HepG2 (cell line): ENCODE measurements at regions of chr16 and their contacts with region 1.

Region 1: DNA sequence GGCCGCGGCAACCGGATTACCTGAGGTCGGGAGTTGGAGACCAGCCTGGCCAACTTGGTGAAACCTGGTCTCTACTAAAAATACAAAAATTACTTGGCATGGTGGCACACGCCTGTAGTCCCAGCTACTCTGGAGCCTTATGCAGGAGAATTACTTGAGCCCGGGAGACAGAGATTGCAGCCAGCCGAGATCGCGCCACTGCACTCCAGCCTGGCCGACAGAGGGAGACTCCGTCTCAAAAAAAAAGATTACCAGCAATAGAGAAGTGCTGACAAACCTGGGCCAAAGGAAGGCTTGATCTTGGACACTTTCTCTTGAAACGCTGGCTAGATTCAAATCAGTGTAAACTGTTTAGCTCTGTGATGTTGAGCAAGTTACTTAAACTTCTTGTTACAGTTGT is 4.3 kb downstream of the MT1H start:
- DNase-seq: peak; percentile 47
- ATAC-seq: peak; percentile 75
- H3K4me3 ChIP-seq: no peak overlapping the region
- H3K27ac ChIP-seq: no peak overlapping the region
- H3K4me1 ChIP-seq: 0 out of 2 replicates have a peak, but pooled peaks cover 3% of the 10 kb centered on the region
- H3K27me3 ChIP-seq: peaks cover 6 to 49% of the 10 kb centered on the region in 2 experiments
- CTCF ChIP-seq: peak; percentile 83
- EP300 ChIP-seq: no peak
- POLR2A ChIP-seq: no peak
- RAD21 ChIP-seq: peak; percentile 79

Region 2: DNA sequence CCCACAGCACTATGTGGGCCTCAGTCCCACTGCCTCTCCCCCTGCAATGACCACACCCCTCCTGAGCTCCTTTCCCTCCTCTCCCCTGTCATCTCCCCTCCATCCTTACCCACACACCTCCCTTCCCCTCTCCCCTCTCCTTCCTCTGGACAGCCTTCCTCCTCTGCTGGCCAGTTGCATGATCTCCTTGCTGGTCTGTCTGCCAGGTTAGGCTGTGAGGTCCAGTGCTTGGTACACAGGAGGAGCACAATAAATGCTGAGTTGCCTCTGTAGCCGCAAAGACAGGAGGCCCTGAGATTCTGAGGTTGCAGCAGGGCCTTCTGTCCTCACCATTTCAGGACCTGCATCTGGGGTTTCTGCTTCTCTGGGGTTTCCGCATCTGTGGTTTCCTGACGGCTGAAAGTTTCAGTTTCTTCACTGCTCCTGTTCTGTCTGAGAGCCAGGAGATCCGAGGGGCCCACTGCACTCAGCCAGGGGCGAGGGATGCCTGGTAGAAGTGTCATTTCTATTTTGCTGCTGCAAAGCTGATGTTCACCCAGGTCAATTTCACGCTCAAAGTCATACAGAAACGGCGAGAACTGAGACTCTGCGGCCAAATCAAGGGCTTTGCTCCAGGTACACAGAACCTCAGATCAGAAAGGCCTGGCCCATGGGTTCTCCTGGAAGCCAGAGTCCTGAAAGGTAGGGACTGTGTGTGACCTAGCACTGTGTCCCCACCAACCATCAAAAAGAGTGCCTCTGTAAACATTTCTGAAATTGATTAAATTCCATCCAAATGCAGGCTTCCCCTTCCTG is 186.5 kb after region 1 on chr16:
- CTCF ChIA-PET with region 1: no interaction called
- POLR2A ChIA-PET with region 1: no interaction called
- in situ Hi-C with region 1: no loop called
- intact Hi-C with region 1: loop called (anchors 5 kb)
- DNase-seq: peak; percentile 67
- ATAC-seq: peak; percentile 71
- H3K4me3 ChIP-seq: peak overlapping the region; percentile 33 to 62 (median 44)
- H3K27ac ChIP-seq: peak overlapping the region; percentile 34
- H3K4me1 ChIP-seq: peaks cover 87% of the 10 kb centered on the region
- H3K27me3 ChIP-seq: no peaks in the 10 kb centered on the region
- CTCF ChIP-seq: no peak
- EP300 ChIP-seq: no peak
- POLR2A ChIP-seq: no peak
- RAD21 ChIP-seq: no peak